ENCODE measurements at regions of chr14 and their contacts with region 1.

Region 1: GRCh38 chr14:97218691-97219430 is 421.7 kb downstream of the VRK1 start:
- DNase-seq: peak; percentile 57
- H3K4me3 ChIP-seq: peak overlapping the region; percentile 37
- H3K27ac ChIP-seq: peak overlapping the region; percentile 99
- H3K4me1 ChIP-seq: peaks cover 91% of the 10 kb centered on the region
- H3K27me3 ChIP-seq: no peaks in the 10 kb centered on the region
- CTCF ChIP-seq: peak; percentile 16; the same call in 1 of the 2 replicates

Region 2: GRCh38 chr14:95585953-95586620 is 1632.8 kb before region 1 on chr14:
- CTCF ChIA-PET with region 1: no interaction called
- POLR2A ChIA-PET with region 1: interaction called, 10 read pairs
- intact Hi-C with region 1: no loop called
- DNase-seq: no peak
- H3K4me3 ChIP-seq: no peak overlapping the region
- H3K27ac ChIP-seq: no peak overlapping the region
- H3K4me1 ChIP-seq: no peaks in the 10 kb centered on the region
- H3K27me3 ChIP-seq: no peaks in the 10 kb centered on the region
- CTCF ChIP-seq: no peak

Region 3: GRCh38 chr14:96479435-96480146 is 739.3 kb before region 1 on chr14:
- CTCF ChIA-PET with region 1: no interaction called
- POLR2A ChIA-PET with region 1: interaction called, 3 read pairs
- intact Hi-C with region 1: loop called (anchors 5 kb)
- DNase-seq: peak; percentile 50
- H3K4me3 ChIP-seq: peak overlapping the region; percentile 54
- H3K27ac ChIP-seq: peak overlapping the region; percentile 74
- H3K4me1 ChIP-seq: peaks cover 19% of the 10 kb centered on the region
- H3K27me3 ChIP-seq: no peaks in the 10 kb centered on the region
- CTCF ChIP-seq: no peak

Region 4: DNA sequence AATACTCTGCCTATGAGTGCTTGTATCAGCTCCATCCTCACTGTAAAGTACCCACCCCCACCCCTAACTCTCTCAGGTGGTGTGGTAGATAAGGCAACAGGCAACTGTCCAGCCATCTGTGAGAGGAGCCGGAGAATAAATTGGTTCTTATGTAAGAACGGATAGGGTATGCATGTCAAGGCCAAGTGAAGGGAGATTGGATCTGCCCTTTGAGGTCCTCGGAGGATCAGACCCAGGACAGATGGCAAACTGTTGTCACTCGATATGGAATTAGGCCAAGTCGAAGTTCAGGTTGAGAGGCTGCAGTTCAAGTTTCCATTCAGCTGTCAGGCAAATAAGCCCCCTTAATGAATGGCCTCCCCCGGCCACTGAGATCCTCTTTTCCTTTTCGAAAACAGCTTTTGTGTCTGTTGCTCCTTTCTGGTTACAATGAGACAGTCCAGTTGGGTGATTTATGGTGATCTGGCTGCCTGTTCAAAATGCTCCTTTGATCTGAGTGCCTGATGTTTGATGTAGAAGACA is 301.4 kb before region 1 on chr14:
- CTCF ChIA-PET with region 1: no interaction called
- POLR2A ChIA-PET with region 1: no interaction called
- intact Hi-C with region 1: no loop called
- DNase-seq: no peak
- H3K4me3 ChIP-seq: no peak overlapping the region
- H3K27ac ChIP-seq: no peak overlapping the region
- H3K4me1 ChIP-seq: peaks cover 22% of the 10 kb centered on the region
- H3K27me3 ChIP-seq: no peaks in the 10 kb centered on the region
- CTCF ChIP-seq: no peak

Region 5: GRCh38 chr14:97233319-97233985 is 14.6 kb after region 1 on chr14:
- CTCF ChIA-PET with region 1: interaction called, 8 read pairs
- POLR2A ChIA-PET with region 1: interaction called, 11 read pairs
- intact Hi-C with region 1: loop called (anchors 1 kb)
- DNase-seq: peak; percentile 63
- H3K4me3 ChIP-seq: no peak overlapping the region
- H3K27ac ChIP-seq: peak overlapping the region; percentile 93
- H3K4me1 ChIP-seq: peaks cover 58% of the 10 kb centered on the region
- H3K27me3 ChIP-seq: no peaks in the 10 kb centered on the region
- CTCF ChIP-seq: no peak

Region 6: DNA sequence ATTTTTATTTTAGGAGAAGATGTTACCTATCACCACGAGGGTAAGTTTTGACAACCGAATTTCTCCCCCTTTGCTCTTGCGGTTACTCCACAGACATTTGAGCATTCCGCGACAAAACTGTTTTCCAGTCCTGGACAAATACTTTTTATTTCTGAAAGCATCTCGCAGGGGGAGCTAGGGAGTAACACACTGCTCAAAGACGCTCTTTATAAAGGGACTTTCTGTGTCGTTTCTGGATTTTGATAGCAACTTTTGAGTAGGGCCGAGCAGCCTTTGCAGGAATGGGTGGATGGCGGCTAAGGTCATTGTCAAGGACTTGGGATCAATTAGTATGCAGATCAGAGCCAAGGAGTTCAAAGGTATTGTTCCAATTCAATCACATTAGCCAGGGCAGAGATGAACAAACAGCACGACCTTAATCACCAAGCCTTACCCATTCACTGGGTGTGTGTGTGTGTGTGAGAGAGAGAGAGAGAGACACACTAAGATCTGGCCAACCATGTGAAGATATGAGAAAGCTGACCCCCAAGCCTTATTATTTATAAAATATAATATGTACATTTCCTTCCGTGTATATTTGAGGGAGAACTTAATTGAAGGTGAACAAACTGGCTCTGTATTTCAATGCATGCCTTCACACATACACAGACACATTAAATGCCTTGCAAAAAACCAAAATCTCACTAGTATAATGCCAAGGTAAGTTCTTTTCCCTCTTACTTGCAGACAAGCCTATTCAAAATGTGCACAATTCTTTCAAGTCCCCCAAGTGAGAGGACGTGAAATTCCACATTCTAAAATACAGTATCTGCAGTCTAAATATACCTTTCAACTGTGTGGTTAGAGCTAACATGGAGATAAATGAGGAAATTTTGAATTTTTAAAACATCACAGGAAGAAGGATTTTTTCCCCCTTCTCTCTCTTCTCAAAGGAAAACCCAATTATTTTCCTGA is 192.1 kb after region 1 on chr14:
- CTCF ChIA-PET with region 1: no interaction called
- POLR2A ChIA-PET with region 1: interaction called, 3 read pairs
- intact Hi-C with region 1: loop called (anchors 2 kb)
- DNase-seq: peak; percentile 84
- H3K4me3 ChIP-seq: peak overlapping the region; percentile 44
- H3K27ac ChIP-seq: peak overlapping the region; percentile 85
- H3K4me1 ChIP-seq: peaks cover 78% of the 10 kb centered on the region
- H3K27me3 ChIP-seq: no peaks in the 10 kb centered on the region
- CTCF ChIP-seq: peak; percentile 63

Region 7: GRCh38 chr14:97978341-97978740 is 759.5 kb after region 1 on chr14:
- CTCF ChIA-PET with region 1: no interaction called
- POLR2A ChIA-PET with region 1: no interaction called
- intact Hi-C with region 1: loop called (anchors 5 kb)
- DNase-seq: peak; percentile 92
- H3K4me3 ChIP-seq: peak overlapping the region; percentile 46
- H3K27ac ChIP-seq: peak overlapping the region; percentile 85
- H3K4me1 ChIP-seq: peaks cover 33% of the 10 kb centered on the region
- H3K27me3 ChIP-seq: no peaks in the 10 kb centered on the region
- CTCF ChIP-seq: peak; percentile 71

Region 8: DNA sequence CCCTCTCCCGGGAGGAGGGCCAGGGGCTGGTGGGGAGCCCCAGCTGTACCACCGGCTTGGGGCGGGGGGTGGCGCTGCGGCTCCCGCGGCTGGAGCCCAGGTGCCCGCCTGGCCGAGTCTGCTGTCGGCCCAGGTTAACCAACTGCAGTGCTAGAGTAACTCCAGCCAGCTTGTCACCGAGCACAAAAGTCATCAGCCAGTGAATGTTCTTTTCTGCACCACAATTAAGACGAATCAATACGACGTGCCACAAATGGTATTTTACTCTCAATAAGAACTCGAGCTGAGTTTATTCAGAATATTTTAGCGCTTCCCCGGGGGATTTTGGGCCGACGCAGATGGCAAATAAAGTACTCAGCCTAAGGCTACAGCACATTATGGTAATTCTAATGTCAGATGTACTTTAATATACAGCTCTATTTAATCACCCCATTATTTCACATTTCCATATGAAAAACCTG is 1969.9 kb after region 1 on chr14:
- CTCF ChIA-PET with region 1: no interaction called
- POLR2A ChIA-PET with region 1: interaction called, 17 read pairs
- intact Hi-C with region 1: no loop called
- DNase-seq: peak; percentile 45
- H3K4me3 ChIP-seq: peak overlapping the region; percentile 26
- H3K27ac ChIP-seq: peak overlapping the region; percentile 69
- H3K4me1 ChIP-seq: peaks cover 64% of the 10 kb centered on the region
- H3K27me3 ChIP-seq: no peaks in the 10 kb centered on the region
- CTCF ChIP-seq: peak; percentile 52